HCT116 (cell line): ENCODE measurements at regions of chr17 and their contacts with region 1.

Region 1: DNA sequence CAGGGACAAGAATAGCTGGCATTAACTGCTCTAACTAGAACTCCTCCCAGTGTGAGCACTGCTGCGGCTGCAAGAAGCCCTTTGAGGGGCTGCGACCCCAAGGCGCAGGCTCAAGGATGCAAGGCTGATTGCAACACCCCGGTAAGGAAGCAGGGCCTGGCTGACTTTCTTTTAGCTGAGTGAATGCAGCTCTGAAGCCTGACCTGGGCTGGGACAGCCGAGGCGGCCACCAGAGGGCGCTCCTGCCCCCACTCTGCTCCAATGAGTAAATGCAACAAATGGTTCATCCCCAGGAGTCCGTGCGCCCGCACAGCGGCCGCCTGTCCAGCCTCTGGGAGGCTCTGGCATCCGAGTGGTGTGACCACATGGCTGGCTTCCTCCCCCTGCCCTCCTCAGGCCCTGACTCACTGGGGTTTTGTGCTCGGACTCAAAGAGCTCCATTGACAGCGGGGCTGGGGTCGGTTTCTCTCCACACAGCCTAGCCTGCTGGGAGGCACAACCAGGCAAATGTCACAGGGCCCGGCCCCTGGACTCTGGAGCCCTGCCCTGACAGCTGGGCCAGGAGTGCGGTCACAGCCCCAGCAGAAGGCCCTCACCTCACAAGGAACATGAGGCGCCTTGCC is at the start of gene SMIM5:
- DNase-seq: peak; percentile 63
- ATAC-seq: peak; percentile 89
- H3K4me3 ChIP-seq: peak within 1 kb of the TSS in 1 of 2 experiments; percentile 6; a peak in 1 of 4 replicates
- H3K27ac ChIP-seq: peak within 1 kb of the TSS; percentile 73
- H3K4me1 ChIP-seq: peaks cover 15 to 22% of the 10 kb centered on the region in 2 experiments
- H3K27me3 ChIP-seq: no peaks in the 10 kb centered on the region
- CTCF ChIP-seq: peak; percentile 95 to 99 (median 99)
- POLR2A ChIP-seq: no peak
- RAD21 ChIP-seq: peak; percentile 92
- total RNA-seq, gene SMIM5: 0.12 TPM

Region 2: DNA sequence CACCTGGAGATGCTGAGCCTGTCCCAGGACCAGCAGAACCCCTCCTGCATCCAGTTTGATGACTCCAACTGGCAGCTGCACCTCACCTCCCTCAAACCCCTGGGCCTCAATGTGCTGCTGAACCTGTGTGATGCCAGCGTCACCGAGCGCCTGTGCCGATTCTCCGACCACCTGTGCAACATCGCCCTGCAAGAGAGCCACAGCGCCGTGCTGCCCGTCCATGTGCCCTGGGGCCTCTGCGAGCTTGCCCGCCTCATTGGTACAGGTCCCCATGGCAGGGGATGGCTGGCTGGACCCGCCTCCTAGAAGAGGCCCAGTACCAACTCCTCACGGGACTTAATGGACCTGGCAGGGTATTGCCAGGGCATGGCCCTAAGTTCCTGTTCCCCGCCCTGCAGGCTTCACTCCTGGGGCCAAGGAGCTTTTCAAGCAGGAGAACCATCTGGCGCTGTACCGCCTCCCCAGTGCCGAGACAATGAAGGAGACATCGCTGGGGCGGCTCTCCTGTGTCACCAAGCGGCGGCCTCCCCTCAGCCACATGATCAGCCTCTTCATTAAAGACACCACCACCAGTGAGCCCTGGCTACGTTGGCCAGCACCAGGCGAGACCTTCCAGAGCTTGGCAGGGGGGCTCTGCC is 140.3 kb before region 1 on chr17:
- CTCF ChIA-PET with region 1: no interaction called
- POLR2A ChIA-PET with region 1: no interaction called
- RAD21 ChIA-PET with region 1: no interaction called
- intact Hi-C with region 1: no loop called
- DNase-seq: no peak
- ATAC-seq: no peak
- H3K4me3 ChIP-seq: no peak overlapping the region
- H3K27ac ChIP-seq: no peak overlapping the region
- H3K4me1 ChIP-seq: no peaks in the 10 kb centered on the region
- H3K27me3 ChIP-seq: no peaks in the 10 kb centered on the region
- CTCF ChIP-seq: no peak
- POLR2A ChIP-seq: no peak
- RAD21 ChIP-seq: no peak

Region 3: GRCh38 chr17:75601057-75602051 is 31.6 kb before region 1 on chr17:
- CTCF ChIA-PET with region 1: interaction called, 73 read pairs
- POLR2A ChIA-PET with region 1: interaction called, 5 read pairs
- RAD21 ChIA-PET with region 1: interaction called, 6 to 9 read pairs
- intact Hi-C with region 1: no loop called
- DNase-seq: peak; percentile 96
- ATAC-seq: peak; percentile 89
- H3K4me3 ChIP-seq: peak overlapping the region in 1 of 2 experiments; percentile 30; a peak in 2 of 4 replicates
- H3K27ac ChIP-seq: peak overlapping the region; percentile 2; the same call in 1 of the 2 replicates
- H3K4me1 ChIP-seq: peaks cover 15 to 51% of the 10 kb centered on the region in 2 experiments
- H3K27me3 ChIP-seq: no peaks in the 10 kb centered on the region
- CTCF ChIP-seq: peak; percentile 95 to 100 (median 99); a peak in 5 of 6 replicates
- POLR2A ChIP-seq: no peak
- RAD21 ChIP-seq: peak; percentile 87

Region 4: DNA sequence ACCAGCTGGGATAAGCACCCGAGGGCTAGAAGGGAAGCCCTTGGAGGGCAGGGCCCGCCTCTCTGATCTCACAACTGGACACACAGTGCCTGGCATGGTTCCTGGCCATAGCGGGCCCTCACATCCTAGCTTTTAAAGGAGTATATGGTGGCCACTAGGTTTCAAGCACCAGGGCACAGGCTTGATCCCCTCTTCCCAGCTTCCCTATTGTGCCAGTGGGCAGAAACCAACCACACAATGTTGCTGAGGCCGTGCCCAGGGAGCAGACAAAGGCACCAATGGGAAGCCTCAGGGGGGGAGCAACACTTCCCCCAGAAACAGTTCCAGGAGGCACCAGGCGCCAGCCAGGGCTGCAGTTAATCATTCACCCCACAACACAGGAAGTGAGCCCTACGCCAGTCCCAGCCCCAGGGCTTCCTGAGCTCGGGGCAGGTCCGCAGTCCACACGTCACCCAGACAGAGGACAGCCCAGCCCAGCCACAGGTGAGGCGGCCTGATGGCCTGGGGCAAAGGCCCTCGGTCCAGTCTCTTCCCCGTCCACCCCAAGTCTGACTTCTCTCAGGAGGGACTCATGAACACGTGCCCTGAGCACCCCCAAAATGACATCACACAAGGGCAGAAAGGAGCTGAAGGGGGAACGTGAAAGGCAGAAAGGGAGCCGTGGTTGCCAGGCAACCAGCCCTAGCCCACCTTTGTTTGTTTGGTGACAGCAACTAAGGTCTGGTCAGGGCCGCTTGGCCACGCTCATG is 13.1 kb after region 1 on chr17:
- CTCF ChIA-PET with region 1: interaction called, 80 read pairs
- POLR2A ChIA-PET with region 1: interaction called, 17 read pairs
- RAD21 ChIA-PET with region 1: no interaction called
- intact Hi-C with region 1: no loop called
- DNase-seq: peak; percentile 64
- ATAC-seq: peak; percentile 89
- H3K4me3 ChIP-seq: peak overlapping the region; percentile 8 to 55
- H3K27ac ChIP-seq: peak overlapping the region; percentile 77
- H3K4me1 ChIP-seq: peaks cover 34 to 60% of the 10 kb centered on the region in 2 experiments
- H3K27me3 ChIP-seq: no peaks in the 10 kb centered on the region
- CTCF ChIP-seq: no peak
- POLR2A ChIP-seq: no peak
- RAD21 ChIP-seq: no peak

Region 5: GRCh38 chr17:75667021-75667790 is 34.2 kb after region 1 on chr17 and contains the starts of genes RECQL5 and SAP30BP:
- CTCF ChIA-PET with region 1: interaction called, 14 read pairs
- POLR2A ChIA-PET with region 1: interaction called, 3 read pairs
- RAD21 ChIA-PET with region 1: no interaction called
- intact Hi-C with region 1: no loop called
- DNase-seq: peak; percentile 99
- ATAC-seq: peak; percentile 100
- H3K4me3 ChIP-seq: peak within 1 kb of the TSS; percentile 79 to 83
- H3K27ac ChIP-seq: peak within 1 kb of the TSS; percentile 74
- H3K4me1 ChIP-seq: peaks cover 13 to 19% of the 10 kb centered on the region in 2 experiments; a peak in 3 of 4 replicates
- H3K27me3 ChIP-seq: no peaks in the 10 kb centered on the region
- CTCF ChIP-seq: no peak
- POLR2A ChIP-seq: peak; percentile 69
- RAD21 ChIP-seq: no peak
- total RNA-seq, gene RECQL5: 83.3 TPM
- total RNA-seq, gene SAP30BP: 149 TPM

Region 6: DNA sequence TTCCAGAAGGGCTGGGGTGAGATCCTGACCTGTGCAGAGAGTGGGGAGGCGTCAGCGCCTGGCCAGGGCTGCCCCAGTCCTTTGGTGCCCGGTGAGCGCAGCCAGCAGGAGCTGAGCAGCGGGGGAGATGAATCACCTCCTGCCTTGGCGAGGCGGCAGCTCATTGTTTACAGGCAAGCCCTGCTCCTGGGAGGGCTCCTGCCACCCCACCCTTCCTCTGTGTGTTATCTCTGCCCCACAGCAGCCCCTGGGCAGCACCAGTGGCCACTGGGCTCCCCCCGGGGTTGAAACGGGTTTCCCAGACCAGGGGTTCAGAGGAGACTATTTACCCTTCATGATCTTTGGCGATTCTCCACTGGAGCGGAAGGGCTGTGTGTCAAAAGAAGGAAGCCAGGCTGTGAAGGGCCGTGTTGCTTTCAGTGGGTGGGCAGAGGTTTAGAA is 74.2 kb after region 1 on chr17:
- CTCF ChIA-PET with region 1: interaction called, 13 read pairs
- POLR2A ChIA-PET with region 1: no interaction called
- RAD21 ChIA-PET with region 1: no interaction called
- intact Hi-C with region 1: no loop called
- DNase-seq: peak; percentile 94
- ATAC-seq: peak; percentile 95
- H3K4me3 ChIP-seq: peak overlapping the region in 1 of 2 experiments; percentile 43; a peak in 2 of 4 replicates
- H3K27ac ChIP-seq: peak overlapping the region; percentile 85
- H3K4me1 ChIP-seq: peaks cover 55 to 86% of the 10 kb centered on the region in 2 experiments
- H3K27me3 ChIP-seq: no peaks in the 10 kb centered on the region
- CTCF ChIP-seq: no peak
- POLR2A ChIP-seq: no peak
- RAD21 ChIP-seq: no peak

Region 7: GRCh38 chr17:75764711-75765421 is 131.9 kb after region 1 on chr17 and contains the start of gene GALK1:
- CTCF ChIA-PET with region 1: interaction called, 13 read pairs
- POLR2A ChIA-PET with region 1: no interaction called
- RAD21 ChIA-PET with region 1: interaction called in 1 of 2 experiments, 6 read pairs
- intact Hi-C with region 1: no loop called
- DNase-seq: no peak
- ATAC-seq: peak; percentile 85
- H3K4me3 ChIP-seq: peak within 1 kb of the TSS; percentile 84 to 91
- H3K27ac ChIP-seq: peak within 1 kb of the TSS; percentile 78
- H3K4me1 ChIP-seq: peaks cover 13 to 29% of the 10 kb centered on the region in 2 experiments
- H3K27me3 ChIP-seq: no peaks in the 10 kb centered on the region
- CTCF ChIP-seq: peak in 2 of 3 experiments; percentile 65 to 94; a peak in 4 of 6 replicates
- POLR2A ChIP-seq: no peak
- RAD21 ChIP-seq: peak; percentile 86
- total RNA-seq, gene GALK1: 57.8 TPM